ENCODE measurements at regions of chr16 and their contacts with region 1.

Region 1: GRCh38 chr16:72847187-72848027 is 200.5 kb downstream of the ZFHX3 start:
- DNase-seq: no peak
- H3K4me3 ChIP-seq: no peak overlapping the region
- H3K27ac ChIP-seq: peak overlapping the region; percentile 51 to 78
- H3K4me1 ChIP-seq: peaks cover 0 to 11% of the 10 kb centered on the region in 2 donors
- H3K27me3 ChIP-seq: no peaks in the 10 kb centered on the region
- CTCF ChIP-seq: peak in 1 of 4 experiments; percentile 25
- POLR2A ChIP-seq: no peak

Region 2: GRCh38 chr16:72952811-72953595 is 105.6 kb after region 1 on chr16:
- intact Hi-C with region 1: loop called (anchors 10 kb)
- DNase-seq: no peak
- H3K4me3 ChIP-seq: peak overlapping the region in 1 of 2 donors; percentile 5
- H3K27ac ChIP-seq: peak overlapping the region; percentile 53 to 66
- H3K4me1 ChIP-seq: no peaks in the 10 kb centered on the region
- H3K27me3 ChIP-seq: no peaks in the 10 kb centered on the region
- CTCF ChIP-seq: no peak
- POLR2A ChIP-seq: no peak

Measured in uterus (tissue), 4 donors.